ENCODE measurements at regions of chr1 and their contacts with region 1.

Region 1: DNA sequence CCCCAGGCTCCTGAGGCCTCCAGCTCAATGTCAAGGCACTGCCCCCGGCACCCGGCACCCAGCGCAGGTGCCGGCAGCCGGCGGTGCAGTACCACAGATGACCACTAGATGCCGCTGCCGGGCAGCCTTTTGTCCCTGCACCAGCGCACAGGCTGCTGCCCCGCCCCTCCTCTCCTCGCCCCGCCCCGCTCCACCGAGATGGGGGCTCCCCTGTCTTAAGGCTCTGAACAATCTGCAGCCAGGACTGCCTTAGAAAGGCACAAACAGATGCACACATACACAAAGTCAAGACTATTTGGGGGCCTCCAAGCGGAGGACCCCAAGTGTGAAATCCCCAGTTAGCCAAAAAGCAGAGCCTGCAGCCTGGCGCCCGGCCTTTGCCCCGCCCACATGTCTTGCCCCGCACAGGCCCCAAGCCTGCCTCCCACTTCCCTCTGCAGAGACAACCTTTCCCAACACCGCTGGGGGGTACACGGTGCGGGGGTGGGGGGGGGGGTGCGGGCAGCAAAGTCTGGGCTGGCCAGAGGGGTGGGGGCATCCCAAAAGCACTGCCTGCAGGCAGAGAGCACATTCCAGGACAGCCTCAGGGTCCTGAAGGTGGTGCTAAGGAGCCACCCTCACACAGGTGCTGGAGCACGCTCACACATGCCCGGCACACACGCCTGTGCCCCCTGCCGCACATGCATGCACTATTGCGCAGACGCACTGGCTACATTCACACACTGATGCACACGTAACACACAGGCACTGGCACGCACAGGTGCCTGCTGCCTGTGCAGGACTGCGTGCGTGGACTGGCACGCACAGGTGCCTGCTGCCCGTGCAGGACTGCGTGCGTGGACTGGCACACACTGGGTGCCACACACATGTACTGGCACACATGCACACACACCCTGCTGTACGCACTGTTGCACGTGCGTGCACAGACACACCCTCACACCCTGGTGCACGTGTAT is 37.1 kb downstream of the ARHGEF16 start:
- DNase-seq: no peak
- H3K4me3 ChIP-seq: no peak overlapping the region
- H3K27me3 ChIP-seq: no peaks in the 10 kb centered on the region
- CTCF ChIP-seq: peak; percentile 98

Region 2: DNA sequence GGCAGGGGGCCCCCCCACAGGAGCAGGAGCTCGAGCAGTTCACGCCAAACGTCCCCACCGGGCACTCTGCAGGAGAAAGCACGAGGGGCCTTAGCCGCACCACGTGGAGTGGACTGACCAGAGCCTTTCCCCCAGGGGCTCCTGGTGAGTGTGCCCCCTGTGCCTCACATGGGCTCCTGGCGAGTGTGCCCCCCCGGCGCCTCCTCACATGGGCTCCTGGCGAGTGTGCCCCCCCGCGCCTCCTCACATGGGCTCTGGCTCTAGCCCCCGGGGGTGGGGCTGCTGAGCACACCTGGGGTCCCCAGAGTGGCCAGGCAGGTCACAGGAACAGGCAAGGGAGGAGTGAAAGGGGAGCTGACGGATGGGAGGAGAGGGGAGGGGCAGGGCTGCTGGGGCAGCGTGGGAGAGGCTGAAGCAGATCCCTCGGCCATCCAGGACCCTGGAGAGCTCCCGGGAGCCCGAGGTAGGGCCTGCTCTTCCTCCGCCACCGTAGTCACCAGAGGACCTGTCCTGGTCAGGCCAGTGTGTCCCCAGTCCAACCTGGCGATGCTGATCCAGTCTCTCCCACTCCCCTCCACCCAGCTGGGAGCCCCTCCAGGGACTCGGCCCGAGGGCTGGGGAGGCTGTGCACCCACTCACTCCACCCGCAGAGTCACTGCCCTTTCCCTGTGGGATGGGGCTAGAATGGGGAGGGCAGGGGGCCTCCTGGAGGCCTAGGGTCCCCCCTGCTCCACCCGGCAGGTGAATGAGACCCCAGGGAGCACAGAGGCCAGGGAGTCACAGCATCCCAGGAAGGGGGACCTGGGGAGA is 10.5 kb after region 1 on chr1:
- CTCF ChIA-PET with region 1: interaction called, 22 read pairs
- POLR2A ChIA-PET with region 1: no interaction called
- DNase-seq: no peak
- H3K4me3 ChIP-seq: no peak overlapping the region
- H3K27me3 ChIP-seq: no peaks in the 10 kb centered on the region
- CTCF ChIP-seq: no peak